Motor neuron (in vitro differentiated cells): ENCODE measurements at regions of chr2 and their contacts with region 1.

Region 1: GRCh38 chr2:177275041-177276020 is 10.8 kb upstream of the NFE2L2 start:
- ATAC-seq: peak in 2 of 8 experiments; percentile 31 to 63
- H3K4me3 ChIP-seq: no peak overlapping the region
- H3K27ac ChIP-seq: no peak overlapping the region
- H3K4me1 ChIP-seq: no peaks in the 10 kb centered on the region

Region 2: GRCh38 chr2:177325270-177325929 is 50.1 kb after region 1 on chr2:
- in situ Hi-C with region 1: loop called in 1 of 9 experiments (anchors 10 kb)
- ATAC-seq: peak in 4 of 8 experiments; percentile 36 to 82 (median 41)
- H3K4me3 ChIP-seq: no peak overlapping the region
- H3K27ac ChIP-seq: no peak overlapping the region
- H3K4me1 ChIP-seq: no peaks in the 10 kb centered on the region

Region 3: GRCh38 chr2:177353187-177353478 is 77.8 kb after region 1 on chr2:
- in situ Hi-C with region 1: no loop called
- ATAC-seq: no peak
- H3K4me3 ChIP-seq: no peak overlapping the region
- H3K27ac ChIP-seq: no peak overlapping the region
- H3K4me1 ChIP-seq: peaks cover 8 to 13% of the 10 kb centered on the region in 2 donors